Activated T-helper 2 cell treated with anti-CD3 and anti-CD28 coated beads, Interferon-gamma antibody, Interleukin-2, Interleukin-4, amounts not matched to agents 10 μg/mL and 5 μg/mL and 100 μg/mL, durations not matched to agents 14 hours and 24 hours and 36 hours (primary cell): ENCODE measurements at regions of chr15 and their contacts with region 1.

Region 1: GRCh38 chr15:79970624-79971434 is at the start of gene BCL2A1:
- DNase-seq: peak; percentile 67
- H3K4me3 Mint-ChIP-seq: peak within 1 kb of the TSS; percentile 98
- H3K27ac Mint-ChIP-seq: peak within 1 kb of the TSS; percentile 96
- H3K4me1 Mint-ChIP-seq: peaks cover 45% of the 10 kb centered on the region
- H3K27me3 Mint-ChIP-seq: no peaks in the 10 kb centered on the region
- total RNA-seq, gene BCL2A1: 101 and 104 TPM in 2 replicates

Region 2: GRCh38 chr15:79640206-79640605 is 330.6 kb before region 1 on chr15:
- intact Hi-C with region 1: loop called (anchors 10 kb)
- DNase-seq: no peak
- H3K4me3 Mint-ChIP-seq: no peak overlapping the region
- H3K27ac Mint-ChIP-seq: no peak overlapping the region
- H3K4me1 Mint-ChIP-seq: peaks cover 14% of the 10 kb centered on the region
- H3K27me3 Mint-ChIP-seq: peaks cover 3% of the 10 kb centered on the region

Region 3: DNA sequence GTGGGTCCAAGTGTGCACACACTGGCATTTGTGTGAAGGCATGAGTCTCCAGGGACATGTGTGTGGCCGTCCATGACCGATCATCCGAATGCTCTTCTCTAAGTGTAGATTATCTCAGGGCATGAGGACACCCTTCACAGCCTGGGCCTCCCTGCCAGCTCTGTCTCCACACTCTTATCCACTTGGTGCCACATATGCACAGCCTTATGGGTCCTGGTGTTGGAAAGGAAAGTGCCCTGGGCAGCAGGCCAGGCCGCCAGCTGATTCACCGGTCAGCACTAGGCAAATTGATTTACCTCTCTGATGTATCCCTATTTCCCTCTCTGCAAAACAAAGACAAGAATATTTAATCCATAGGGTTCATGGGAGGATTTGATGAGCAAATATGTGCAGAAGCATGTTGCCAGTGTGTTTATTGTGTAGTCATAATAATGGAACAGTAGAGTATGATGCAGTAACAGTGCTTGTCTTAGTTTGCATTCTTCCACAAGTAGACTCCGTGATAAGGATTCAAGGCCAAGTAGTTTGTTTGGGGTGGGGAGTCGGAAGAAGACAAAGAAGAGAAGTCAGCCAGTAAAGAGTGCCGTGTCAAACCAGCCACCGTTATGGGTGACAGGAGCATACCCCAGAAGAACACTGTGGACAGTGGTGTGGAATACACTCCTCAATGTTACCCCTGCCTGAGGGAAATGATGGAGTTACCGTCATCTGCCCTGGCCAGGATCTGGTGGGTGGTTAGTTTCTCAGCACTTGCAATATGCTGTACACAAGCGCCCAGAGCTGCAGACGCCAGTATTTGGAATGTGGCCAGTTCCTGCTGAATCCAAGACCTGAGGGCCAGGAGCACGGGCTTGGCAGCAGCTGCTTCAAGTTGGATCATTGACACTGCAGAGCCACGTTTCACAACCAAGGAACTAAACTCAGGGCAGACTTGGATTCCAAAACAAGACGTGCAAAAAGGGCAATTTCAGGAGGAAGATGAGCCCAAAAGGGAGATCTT is 159.1 kb before region 1 on chr15:
- intact Hi-C with region 1: no loop called
- DNase-seq: no peak
- H3K4me3 Mint-ChIP-seq: no peak overlapping the region
- H3K27ac Mint-ChIP-seq: no peak overlapping the region
- H3K4me1 Mint-ChIP-seq: peaks cover 3% of the 10 kb centered on the region
- H3K27me3 Mint-ChIP-seq: no peaks in the 10 kb centered on the region

Region 4: GRCh38 chr15:79923515-79924395 is 47.1 kb before region 1 on chr15:
- intact Hi-C with region 1: loop called (anchors 1 kb)
- DNase-seq: peak; percentile 99
- H3K4me3 Mint-ChIP-seq: peak overlapping the region; percentile 87
- H3K27ac Mint-ChIP-seq: peak overlapping the region; percentile 95
- H3K4me1 Mint-ChIP-seq: peaks cover 15% of the 10 kb centered on the region
- H3K27me3 Mint-ChIP-seq: no peaks in the 10 kb centered on the region

Region 5: DNA sequence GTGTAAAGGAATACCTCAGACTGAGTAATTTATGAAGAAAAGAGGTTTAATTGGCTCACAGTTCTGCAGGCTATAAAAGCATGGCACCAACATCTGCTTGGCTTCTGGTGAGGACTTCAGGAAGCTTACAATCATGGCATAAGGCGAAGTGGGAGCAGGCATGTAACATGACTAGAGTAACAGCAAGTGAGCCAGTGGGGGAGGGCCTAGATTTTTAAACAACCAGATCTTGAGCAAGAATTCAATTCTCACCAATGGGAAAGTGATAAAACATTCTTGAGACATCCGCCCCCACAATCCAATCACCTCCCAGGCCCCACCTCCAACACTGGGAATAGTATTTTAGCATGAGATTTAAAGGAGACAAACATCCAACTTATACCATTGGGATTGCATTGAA is 44.3 kb after region 1 on chr15:
- intact Hi-C with region 1: no loop called
- DNase-seq: no peak
- H3K4me3 Mint-ChIP-seq: no peak overlapping the region
- H3K27ac Mint-ChIP-seq: no peak overlapping the region
- H3K4me1 Mint-ChIP-seq: peaks cover 3% of the 10 kb centered on the region
- H3K27me3 Mint-ChIP-seq: no peaks in the 10 kb centered on the region

Region 6: GRCh38 chr15:80031841-80032240 is 61.0 kb after region 1 on chr15:
- intact Hi-C with region 1: loop called (anchors 2 kb)
- DNase-seq: no peak
- H3K4me3 Mint-ChIP-seq: no peak overlapping the region
- H3K27ac Mint-ChIP-seq: no peak overlapping the region
- H3K4me1 Mint-ChIP-seq: peaks cover 21% of the 10 kb centered on the region
- H3K27me3 Mint-ChIP-seq: no peaks in the 10 kb centered on the region

Region 7: DNA sequence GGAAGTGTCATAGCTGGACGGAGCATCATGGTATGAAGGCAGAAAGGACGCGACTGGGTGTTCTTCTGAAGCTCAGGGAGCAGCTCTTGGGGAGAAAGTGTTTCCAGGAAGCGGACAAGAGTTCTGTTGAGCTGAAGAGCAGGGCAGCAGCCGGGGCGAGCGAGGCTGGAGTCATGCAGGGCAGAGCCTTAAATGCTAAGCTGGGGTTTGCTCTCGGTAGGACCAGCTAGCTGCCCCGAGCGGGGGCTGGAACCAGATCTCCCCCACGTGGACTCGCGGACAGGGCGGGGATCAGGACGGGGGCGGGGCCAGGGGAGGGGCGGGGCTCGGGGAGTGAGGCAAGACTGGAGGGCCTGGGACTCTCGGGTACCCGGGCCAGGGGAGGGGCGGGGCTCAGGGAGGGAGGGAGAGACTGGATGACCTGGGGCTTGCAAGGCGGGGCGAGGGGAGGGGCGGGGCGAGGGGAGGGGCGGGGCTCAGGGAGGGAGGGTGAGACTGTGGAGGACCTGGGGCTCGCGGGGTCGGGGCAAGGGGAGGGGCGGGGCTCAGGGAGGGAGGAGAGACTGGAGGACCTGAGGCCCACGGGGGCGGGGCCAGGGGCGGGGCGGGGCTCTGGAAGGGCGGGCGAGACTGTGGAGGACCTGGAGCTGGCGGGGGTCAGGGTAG is 181.5 kb after region 1 on chr15:
- intact Hi-C with region 1: loop called (anchors 5 kb)
- DNase-seq: peak; percentile 80
- H3K4me3 Mint-ChIP-seq: peak overlapping the region; percentile 95
- H3K27ac Mint-ChIP-seq: peak overlapping the region; percentile 64
- H3K4me1 Mint-ChIP-seq: peaks cover 30% of the 10 kb centered on the region
- H3K27me3 Mint-ChIP-seq: peaks cover 5% of the 10 kb centered on the region

Region 8: GRCh38 chr15:81182756-81183438 is 1212.1 kb after region 1 on chr15:
- intact Hi-C with region 1: no loop called
- DNase-seq: no peak
- H3K4me3 Mint-ChIP-seq: no peak overlapping the region
- H3K27ac Mint-ChIP-seq: no peak overlapping the region
- H3K4me1 Mint-ChIP-seq: peaks cover 5% of the 10 kb centered on the region
- H3K27me3 Mint-ChIP-seq: peaks cover 38% of the 10 kb centered on the region